K562 (cell line): ENCODE measurements at regions of chr1 and their contacts with region 1.

Region 1: DNA sequence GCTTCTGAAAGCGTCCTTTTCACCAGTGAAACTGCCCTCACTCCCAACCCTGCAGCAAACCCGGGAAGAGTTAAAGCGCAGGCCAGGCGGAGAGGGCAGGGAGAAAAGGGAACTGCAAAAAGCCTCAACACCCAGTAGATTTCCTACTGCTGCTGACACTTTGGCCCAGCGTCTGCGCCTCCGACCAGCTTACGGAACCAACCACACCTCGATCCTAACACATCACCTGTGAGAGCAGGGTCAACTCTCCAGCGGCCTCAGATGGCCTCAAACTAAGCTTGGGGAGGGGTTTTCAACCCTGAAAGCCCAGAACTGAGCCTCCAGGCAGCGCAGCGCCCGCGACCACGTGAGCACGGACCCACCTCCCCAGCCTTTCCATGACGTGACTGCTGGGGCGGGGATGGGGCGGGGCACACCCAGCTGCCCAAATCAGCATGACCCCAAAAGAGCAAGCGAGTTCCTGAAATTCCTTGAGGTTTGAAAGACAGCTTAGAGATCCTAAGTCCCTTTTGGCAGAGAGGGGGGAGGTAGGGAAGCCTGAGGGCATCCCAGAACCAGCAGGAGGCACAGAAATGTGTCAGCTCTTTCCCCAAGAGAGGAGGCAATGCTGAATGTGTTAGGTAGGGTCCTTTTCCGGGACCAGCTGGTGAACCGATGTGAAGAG is 59.1 kb downstream of the ITPKB start:
- DNase-seq: peak; percentile 68 to 81 (median 78)
- ATAC-seq: peak; percentile 87
- H3K4me3 ChIP-seq: peak overlapping the region; percentile 31
- H3K27ac ChIP-seq: no peak overlapping the region
- H3K4me1 ChIP-seq: peaks cover 4 to 6% of the 10 kb centered on the region in 2 experiments; a peak in 3 of 5 replicates
- H3K27me3 ChIP-seq: peaks cover 34 to 62% of the 10 kb centered on the region in 2 experiments
- CTCF ChIP-seq: no peak
- EP300 ChIP-seq: no peak
- POLR2A ChIP-seq: no peak
- RAD21 ChIP-seq: no peak

Region 2: DNA sequence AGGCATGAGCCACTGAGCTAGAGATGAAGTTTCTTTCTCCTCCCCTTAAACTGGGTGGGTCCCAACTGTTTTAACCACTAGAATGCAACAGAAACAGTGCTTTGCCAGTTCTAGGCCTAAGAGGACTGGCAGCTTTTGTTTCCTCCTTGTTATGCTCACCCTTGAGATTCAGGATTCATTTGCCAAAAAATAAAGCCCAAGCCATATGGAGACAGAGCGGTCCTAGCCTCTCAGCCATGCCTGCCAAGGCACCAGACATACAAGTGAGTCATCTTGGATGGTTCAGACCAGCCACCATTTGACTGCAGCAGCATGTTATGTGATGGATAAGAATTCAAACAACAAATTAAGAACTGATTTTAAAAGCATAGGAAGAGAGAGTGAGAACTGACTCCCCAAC is 169.5 kb before region 1 on chr1:
- CTCF ChIA-PET with region 1: no interaction called
- POLR2A ChIA-PET with region 1: no interaction called
- in situ Hi-C with region 1: no loop called
- intact Hi-C with region 1: no loop called
- DNase-seq: no peak
- ATAC-seq: no peak
- H3K4me3 ChIP-seq: no peak overlapping the region
- H3K27ac ChIP-seq: no peak overlapping the region
- H3K4me1 ChIP-seq: no peaks in the 10 kb centered on the region
- H3K27me3 ChIP-seq: peaks cover 6 to 19% of the 10 kb centered on the region in 2 experiments; a peak in 3 of 5 replicates
- CTCF ChIP-seq: no peak
- EP300 ChIP-seq: no peak
- POLR2A ChIP-seq: no peak
- RAD21 ChIP-seq: no peak

Region 3: GRCh38 chr1:226634166-226634588 is 45.8 kb before region 1 on chr1:
- CTCF ChIA-PET with region 1: no interaction called
- POLR2A ChIA-PET with region 1: no interaction called
- in situ Hi-C with region 1: no loop called
- intact Hi-C with region 1: loop called (anchors 5 kb)
- DNase-seq: peak; percentile 83 to 87 (median 84)
- ATAC-seq: peak; percentile 94
- H3K4me3 ChIP-seq: no peak overlapping the region
- H3K27ac ChIP-seq: no peak overlapping the region
- H3K4me1 ChIP-seq: peaks cover 0 to 17% of the 10 kb centered on the region in 2 experiments; a peak in 2 of 5 replicates
- H3K27me3 ChIP-seq: peaks cover 22 to 79% of the 10 kb centered on the region in 2 experiments
- CTCF ChIP-seq: peak; percentile 93 to 96 (median 95)
- EP300 ChIP-seq: no peak
- POLR2A ChIP-seq: no peak
- RAD21 ChIP-seq: peak; percentile 93 to 98

Region 4: GRCh38 chr1:226778657-226779058 is 98.7 kb after region 1 on chr1:
- CTCF ChIA-PET with region 1: no interaction called
- POLR2A ChIA-PET with region 1: no interaction called
- in situ Hi-C with region 1: no loop called
- intact Hi-C with region 1: no loop called
- DNase-seq: no peak
- ATAC-seq: no peak
- H3K4me3 ChIP-seq: no peak overlapping the region
- H3K27ac ChIP-seq: no peak overlapping the region
- H3K4me1 ChIP-seq: no peaks in the 10 kb centered on the region
- H3K27me3 ChIP-seq: peaks cover 20 to 53% of the 10 kb centered on the region in 2 experiments
- CTCF ChIP-seq: no peak
- EP300 ChIP-seq: no peak
- POLR2A ChIP-seq: no peak
- RAD21 ChIP-seq: no peak